Endothelial cell of umbilical vein (primary cell): ENCODE measurements at regions of chr16 and their contacts with region 1.

Region 1: GRCh38 chr16:12095275-12096156 is 119.0 kb downstream of the SNX29 start:
- DNase-seq: peak; percentile 64
- H3K4me3 ChIP-seq: no peak overlapping the region
- H3K27ac ChIP-seq: no peak overlapping the region
- H3K4me1 ChIP-seq: peaks cover 19% of the 10 kb centered on the region
- H3K27me3 ChIP-seq: no peaks in the 10 kb centered on the region
- CTCF ChIP-seq: peak; percentile 76 to 87
- POLR2A ChIP-seq: no peak

Region 2: GRCh38 chr16:11892761-11893160 is 202.8 kb before region 1 on chr16:
- CTCF ChIA-PET with region 1: no interaction called
- POLR2A ChIA-PET with region 1: no interaction called
- dilution Hi-C with region 1: no loop called
- intact Hi-C with region 1: no loop called
- DNase-seq: no peak
- H3K4me3 ChIP-seq: no peak overlapping the region
- H3K27ac ChIP-seq: no peak overlapping the region
- H3K4me1 ChIP-seq: peaks cover 17% of the 10 kb centered on the region
- H3K27me3 ChIP-seq: no peaks in the 10 kb centered on the region
- CTCF ChIP-seq: no peak
- POLR2A ChIP-seq: no peak

Region 3: GRCh38 chr16:11986521-11987057 is 108.9 kb before region 1 on chr16:
- CTCF ChIA-PET with region 1: no interaction called
- POLR2A ChIA-PET with region 1: no interaction called
- dilution Hi-C with region 1: no loop called
- intact Hi-C with region 1: no loop called
- DNase-seq: no peak
- H3K4me3 ChIP-seq: no peak overlapping the region
- H3K27ac ChIP-seq: no peak overlapping the region
- H3K4me1 ChIP-seq: no peaks in the 10 kb centered on the region
- H3K27me3 ChIP-seq: no peaks in the 10 kb centered on the region
- CTCF ChIP-seq: no peak
- POLR2A ChIP-seq: no peak

Region 4: GRCh38 chr16:12002447-12003006 is 93.0 kb before region 1 on chr16:
- CTCF ChIA-PET with region 1: no interaction called
- POLR2A ChIA-PET with region 1: no interaction called
- dilution Hi-C with region 1: no loop called
- intact Hi-C with region 1: no loop called
- DNase-seq: no peak
- H3K4me3 ChIP-seq: no peak overlapping the region
- H3K27ac ChIP-seq: no peak overlapping the region
- H3K4me1 ChIP-seq: no peaks in the 10 kb centered on the region
- H3K27me3 ChIP-seq: no peaks in the 10 kb centered on the region
- CTCF ChIP-seq: no peak
- POLR2A ChIP-seq: no peak

Region 5: GRCh38 chr16:12110361-12111107 is 15.0 kb after region 1 on chr16:
- CTCF ChIA-PET with region 1: interaction called, 24 read pairs
- POLR2A ChIA-PET with region 1: no interaction called
- dilution Hi-C with region 1: no loop called
- intact Hi-C with region 1: no loop called
- DNase-seq: no peak
- H3K4me3 ChIP-seq: no peak overlapping the region
- H3K27ac ChIP-seq: no peak overlapping the region
- H3K4me1 ChIP-seq: no peaks in the 10 kb centered on the region
- H3K27me3 ChIP-seq: no peaks in the 10 kb centered on the region
- CTCF ChIP-seq: no peak
- POLR2A ChIP-seq: no peak

Region 6: GRCh38 chr16:12311309-12311708 is 215.8 kb after region 1 on chr16:
- CTCF ChIA-PET with region 1: interaction called, 11 read pairs
- POLR2A ChIA-PET with region 1: no interaction called
- dilution Hi-C with region 1: no loop called
- intact Hi-C with region 1: no loop called
- DNase-seq: peak; percentile 27
- H3K4me3 ChIP-seq: no peak overlapping the region
- H3K27ac ChIP-seq: no peak overlapping the region
- H3K4me1 ChIP-seq: no peaks in the 10 kb centered on the region
- H3K27me3 ChIP-seq: no peaks in the 10 kb centered on the region
- CTCF ChIP-seq: peak in 1 of 2 donors; percentile 12
- POLR2A ChIP-seq: no peak

Region 7: GRCh38 chr16:12449795-12450194 is 354.3 kb after region 1 on chr16:
- CTCF ChIA-PET with region 1: interaction called, 14 read pairs
- POLR2A ChIA-PET with region 1: no interaction called
- dilution Hi-C with region 1: no loop called
- intact Hi-C with region 1: no loop called
- DNase-seq: no peak
- H3K4me3 ChIP-seq: no peak overlapping the region
- H3K27ac ChIP-seq: no peak overlapping the region
- H3K4me1 ChIP-seq: no peaks in the 10 kb centered on the region
- H3K27me3 ChIP-seq: no peaks in the 10 kb centered on the region
- CTCF ChIP-seq: no peak
- POLR2A ChIP-seq: no peak

Region 8: GRCh38 chr16:12646490-12647274 is 551.2 kb after region 1 on chr16:
- CTCF ChIA-PET with region 1: no interaction called
- POLR2A ChIA-PET with region 1: no interaction called
- dilution Hi-C with region 1: no loop called
- intact Hi-C with region 1: loop called (anchors 10 kb)
- DNase-seq: peak; percentile 94
- H3K4me3 ChIP-seq: no peak overlapping the region
- H3K27ac ChIP-seq: peak overlapping the region; percentile 67
- H3K4me1 ChIP-seq: peaks cover 29% of the 10 kb centered on the region
- H3K27me3 ChIP-seq: no peaks in the 10 kb centered on the region
- CTCF ChIP-seq: no peak
- POLR2A ChIP-seq: no peak

Region 9: GRCh38 chr16:13873835-13874438 is 1778.4 kb after region 1 on chr16:
- CTCF ChIA-PET with region 1: interaction called, 20 read pairs
- POLR2A ChIA-PET with region 1: no interaction called
- dilution Hi-C with region 1: no loop called
- intact Hi-C with region 1: loop called (anchors 10 kb)
- DNase-seq: peak; percentile 37
- H3K4me3 ChIP-seq: no peak overlapping the region
- H3K27ac ChIP-seq: no peak overlapping the region
- H3K4me1 ChIP-seq: no peaks in the 10 kb centered on the region
- H3K27me3 ChIP-seq: peaks cover 0 to 2% of the 10 kb centered on the region in 2 experiments
- CTCF ChIP-seq: peak; percentile 37 to 50
- POLR2A ChIP-seq: no peak